ENCODE measurements at regions of chr1 and their contacts with region 1.

Region 1: DNA sequence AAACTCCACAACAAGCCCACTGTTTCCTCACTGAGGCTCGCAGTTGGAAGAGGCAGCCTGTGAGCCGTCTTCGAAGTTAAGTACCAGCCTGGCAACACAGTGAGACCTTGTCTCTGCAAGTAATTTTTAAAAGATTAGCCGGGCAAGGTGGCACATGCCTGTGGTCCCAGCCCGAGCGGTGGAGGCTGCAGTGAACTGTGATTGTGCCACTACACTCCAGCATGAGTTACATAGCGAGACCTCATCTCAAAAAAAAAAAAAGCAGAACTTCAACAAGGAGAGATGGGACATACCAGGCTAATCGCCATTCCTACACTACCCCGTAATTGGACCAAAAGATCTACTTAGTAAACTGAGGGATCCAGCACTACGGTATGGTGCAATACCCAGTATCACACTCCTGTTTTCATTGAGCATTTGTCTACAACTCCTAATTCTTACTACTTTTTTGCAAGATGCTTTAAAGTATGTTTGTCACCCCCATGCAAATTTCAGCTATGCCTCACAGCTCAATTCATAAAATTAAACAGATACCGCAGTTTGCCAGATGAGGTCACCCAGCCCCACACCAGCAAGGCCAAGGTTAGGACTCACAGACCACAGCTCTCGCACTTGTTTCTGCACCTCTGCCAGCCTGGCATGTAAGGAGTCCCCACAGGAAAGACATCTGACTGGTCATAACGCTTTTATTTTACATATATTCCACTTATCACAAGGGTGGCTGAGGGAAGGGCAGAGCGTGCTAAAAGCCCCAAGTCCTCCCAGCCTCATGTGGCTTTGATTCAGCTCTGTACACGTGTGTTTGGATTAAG is 21.0 kb downstream of the SDE2 start:
- DNase-seq: no peak
- ATAC-seq: no peak
- H3K4me3 ChIP-seq: no peak overlapping the region
- H3K27ac ChIP-seq: no peak overlapping the region
- H3K4me1 ChIP-seq: peaks cover 0 to 12% (median 0%) of the 10 kb centered on the region in 9 donors
- H3K27me3 ChIP-seq: no peaks in the 10 kb centered on the region
- CTCF ChIP-seq: no peak

Region 2: DNA sequence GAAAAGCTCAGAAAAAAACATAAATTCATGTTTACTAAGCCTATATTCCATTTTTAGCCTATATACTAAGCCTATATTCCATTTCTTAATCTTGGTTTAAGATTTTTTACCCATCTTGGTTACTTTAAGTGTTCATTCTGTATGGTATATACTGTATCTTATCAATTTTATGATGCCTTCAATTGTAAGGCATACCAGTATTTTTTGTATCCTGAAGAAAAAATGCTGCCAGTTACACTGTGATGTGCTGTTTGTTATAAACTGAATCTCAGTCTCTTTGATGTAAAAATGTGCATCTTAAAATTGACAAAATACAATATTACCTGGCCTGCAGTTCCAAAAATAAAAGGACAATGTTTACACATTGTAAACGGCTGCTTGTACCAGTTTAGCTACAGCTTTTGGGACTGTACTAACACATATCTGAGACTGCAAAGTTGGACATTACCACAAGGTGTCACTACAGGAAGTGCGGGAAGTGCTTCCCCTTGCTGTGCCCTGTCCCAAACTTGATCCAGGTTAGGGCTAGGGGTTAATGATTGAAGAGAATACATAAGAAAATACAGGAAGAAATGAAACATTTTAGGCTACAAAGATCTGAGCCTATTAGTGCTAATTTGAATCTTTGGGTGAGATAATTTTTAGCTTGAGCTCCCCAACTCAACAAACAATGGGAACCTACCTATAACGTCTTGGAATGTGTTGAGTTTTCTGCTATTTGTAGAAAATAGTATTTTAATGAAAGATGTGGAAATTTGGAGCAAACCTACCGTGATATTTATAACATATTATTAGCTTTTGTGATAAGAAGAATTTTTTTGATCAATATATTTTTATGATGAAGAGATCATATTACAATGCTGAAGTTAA is 659.2 kb before region 1 on chr1:
- intact Hi-C with region 1: loop called in 8 of 10 experiments (anchors 2 to 10 kb)
- DNase-seq: peak in 1 of 2 donors; percentile 10
- ATAC-seq: peak in 4 of 8 donors; percentile 62 to 81 (median 66)
- H3K4me3 ChIP-seq: no peak overlapping the region
- H3K27ac ChIP-seq: no peak overlapping the region
- H3K4me1 ChIP-seq: no peaks in the 10 kb centered on the region
- H3K27me3 ChIP-seq: peaks cover 0 to 25% (median 4%) of the 10 kb centered on the region in 7 donors
- CTCF ChIP-seq: peak; percentile 38 to 80 (median 65)

Region 3: DNA sequence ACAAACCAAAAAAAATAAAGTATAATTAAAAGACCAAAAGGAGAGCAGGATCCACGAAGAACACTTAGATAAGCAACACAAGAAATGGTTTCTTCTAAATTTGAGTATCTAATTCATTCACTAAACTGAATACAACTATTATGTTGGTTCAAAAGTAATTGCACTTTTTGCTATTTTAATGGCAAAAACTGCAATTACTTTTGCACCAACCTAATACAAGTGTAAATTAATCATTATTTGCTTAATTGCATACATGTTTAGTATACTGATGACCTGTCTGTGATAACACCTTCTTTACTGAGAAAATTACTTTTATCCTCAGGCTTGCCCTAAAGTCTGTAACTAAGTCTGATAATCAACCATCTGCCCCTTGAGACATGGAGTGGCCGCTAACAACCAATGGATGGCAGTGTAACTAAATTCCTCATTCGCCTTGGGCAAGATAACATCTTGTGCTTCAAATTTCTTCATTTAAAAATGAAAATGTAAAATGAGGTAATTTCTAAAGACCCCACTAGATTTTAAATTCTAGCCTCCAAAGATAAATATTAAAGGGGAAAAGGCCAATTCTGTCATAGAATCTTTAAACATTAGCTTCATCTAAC is 410.5 kb before region 1 on chr1:
- intact Hi-C with region 1: no loop called
- DNase-seq: no peak
- ATAC-seq: no peak
- H3K4me3 ChIP-seq: no peak overlapping the region
- H3K27ac ChIP-seq: no peak overlapping the region
- H3K4me1 ChIP-seq: peaks cover 0 to 46% (median 23%) of the 10 kb centered on the region in 9 donors
- H3K27me3 ChIP-seq: no peaks in the 10 kb centered on the region
- CTCF ChIP-seq: peak in 5 of 9 donors; percentile 11 to 37 (median 25)

Region 4: DNA sequence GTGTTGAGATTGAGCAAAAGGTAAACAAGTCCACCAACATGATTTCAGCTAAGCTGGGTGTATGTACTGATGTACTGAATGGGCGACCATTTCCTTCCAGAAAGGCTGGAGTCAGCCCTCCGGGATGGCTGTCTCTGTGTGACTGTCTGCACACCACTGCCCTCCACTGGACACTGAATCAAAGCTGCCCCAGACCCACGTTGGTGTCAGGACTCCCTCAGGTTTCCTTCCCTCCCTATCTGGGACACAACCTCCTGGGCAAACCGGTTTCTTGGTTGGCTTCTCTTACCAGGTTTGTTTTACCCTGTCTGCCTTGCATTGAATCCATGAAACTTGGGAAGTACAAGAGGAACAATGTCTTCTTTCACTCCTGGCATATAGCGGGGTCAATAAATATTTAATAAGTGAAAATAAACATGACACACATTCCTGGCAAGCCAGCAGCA is 205.8 kb before region 1 on chr1:
- intact Hi-C with region 1: loop called in 7 of 10 experiments (anchors 5 to 10 kb)
- DNase-seq: peak; percentile 72 to 90
- ATAC-seq: peak; percentile 81 to 92 (median 87)
- H3K4me3 ChIP-seq: no peak overlapping the region
- H3K27ac ChIP-seq: peak overlapping the region in 7 of 10 donors; percentile 26 to 67 (median 42)
- H3K4me1 ChIP-seq: peaks cover 19 to 74% (median 52%) of the 10 kb centered on the region in 9 donors
- H3K27me3 ChIP-seq: no peaks in the 10 kb centered on the region
- CTCF ChIP-seq: peak; percentile 81 to 94 (median 91)

Region 5: DNA sequence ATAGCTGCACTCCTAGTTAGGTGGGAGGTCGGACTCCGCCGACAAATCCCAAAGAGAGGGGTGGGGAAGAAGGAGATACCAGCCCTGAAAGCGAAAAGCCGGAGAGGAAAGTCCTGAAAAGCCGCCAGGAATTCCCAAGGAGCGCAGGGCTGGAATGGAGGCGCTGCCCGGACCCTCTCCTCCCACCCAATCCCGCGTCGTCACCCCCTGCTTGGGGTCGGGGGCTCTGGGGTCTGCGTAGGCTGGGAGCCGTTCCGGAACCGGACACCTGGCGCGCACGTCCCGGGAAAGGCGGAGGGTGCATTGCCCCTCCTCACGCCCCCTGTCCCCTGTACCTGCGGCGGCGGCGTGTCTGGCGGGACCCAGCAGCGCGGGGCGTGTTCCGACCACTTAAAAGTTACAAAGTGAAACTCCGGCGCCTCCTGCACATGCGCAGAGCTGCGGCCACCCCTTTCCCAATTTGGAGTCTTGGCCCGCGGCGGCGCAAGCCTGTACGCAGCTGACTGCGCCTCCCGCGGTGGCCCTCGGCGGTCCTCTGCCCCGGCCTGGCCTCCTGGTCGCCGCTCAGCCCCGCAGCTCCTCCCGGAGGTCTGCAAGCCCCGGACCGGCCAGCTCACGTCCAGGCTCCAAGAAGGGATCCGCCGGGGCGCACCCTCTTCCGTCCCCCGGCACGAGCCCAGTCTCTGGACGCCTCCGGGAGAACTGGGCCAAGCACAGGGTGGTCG is 96.0 kb before region 1 on chr1 and contains the start of gene TMEM63A:
- intact Hi-C with region 1: loop called in 1 of 10 experiments (anchors 10 kb)
- DNase-seq: peak; percentile 94 to 97
- ATAC-seq: peak; percentile 90 to 96 (median 95)
- H3K4me3 ChIP-seq: peak within 1 kb of the TSS; percentile 88 to 100 (median 98)
- H3K27ac ChIP-seq: peak within 1 kb of the TSS; percentile 85 to 98 (median 95)
- H3K4me1 ChIP-seq: peaks cover 27 to 59% (median 52%) of the 10 kb centered on the region in 9 donors
- H3K27me3 ChIP-seq: no peaks in the 10 kb centered on the region
- CTCF ChIP-seq: peak in 8 of 9 donors; percentile 22 to 64 (median 48)
- total RNA-seq, gene TMEM63A: 20.9 to 33.5 (median 24.7) TPM

Region 6: DNA sequence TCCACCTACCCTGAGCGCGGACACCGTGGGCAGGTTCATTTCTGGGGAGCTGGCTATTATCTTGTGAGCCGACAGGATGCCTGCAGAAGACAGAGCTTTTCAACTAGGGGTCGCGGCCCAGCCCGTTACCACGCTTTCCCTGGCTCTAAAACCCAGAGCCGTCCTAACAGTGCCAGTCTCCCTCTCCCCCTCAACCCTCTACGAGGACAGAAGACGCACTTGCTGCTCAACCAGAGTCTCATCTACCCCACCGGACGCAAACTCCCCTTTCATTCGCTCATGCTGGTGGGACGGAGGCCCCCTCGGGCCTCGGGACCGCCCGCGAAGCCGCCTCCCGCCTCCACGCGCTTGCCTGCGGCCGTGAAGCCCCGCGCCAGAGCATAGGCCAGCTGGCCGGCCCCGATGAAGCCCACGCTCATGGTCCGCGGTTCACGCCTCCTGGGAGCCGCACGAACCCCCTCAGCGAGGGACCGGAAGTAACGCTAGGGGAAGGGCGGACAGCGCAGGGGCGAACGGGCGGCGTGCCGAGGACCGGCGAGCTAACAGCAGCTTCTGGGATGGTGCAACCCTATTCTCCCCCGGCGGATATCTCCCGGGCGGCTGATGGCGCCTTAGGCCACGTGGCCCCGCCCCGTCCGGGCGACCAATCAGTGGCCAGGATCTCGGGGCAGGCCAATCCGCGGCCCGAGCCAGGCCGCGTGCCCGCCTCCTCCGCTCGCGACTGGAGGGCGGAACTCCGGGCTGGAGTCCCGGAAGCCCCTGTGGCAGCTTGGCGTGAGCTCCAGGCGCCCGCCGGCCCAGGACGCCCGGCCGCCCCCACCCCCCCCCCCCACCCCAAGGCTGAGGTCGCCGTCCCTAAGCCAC is 54.2 kb before region 1 on chr1 and contains the start of gene PYCR2:
- intact Hi-C with region 1: loop called in 4 of 10 experiments (anchors 5 to 10 kb)
- DNase-seq: peak; percentile 94 to 96
- ATAC-seq: peak; percentile 99 to 100 (median 99)
- H3K4me3 ChIP-seq: peak within 1 kb of the TSS; percentile 63 to 95 (median 82)
- H3K27ac ChIP-seq: peak within 1 kb of the TSS; percentile 74 to 98 (median 93)
- H3K4me1 ChIP-seq: peaks cover 5 to 45% (median 27%) of the 10 kb centered on the region in 9 donors
- H3K27me3 ChIP-seq: no peaks in the 10 kb centered on the region
- CTCF ChIP-seq: peak in 3 of 9 donors; percentile 5 to 12 (median 8)
- total RNA-seq, gene PYCR2: 53.6 to 77.4 (median 62.7) TPM

Measured in heart right ventricle (tissue), 16 donors.